ENCODE measurements at regions of chr10 and their contacts with region 1.

Region 1: DNA sequence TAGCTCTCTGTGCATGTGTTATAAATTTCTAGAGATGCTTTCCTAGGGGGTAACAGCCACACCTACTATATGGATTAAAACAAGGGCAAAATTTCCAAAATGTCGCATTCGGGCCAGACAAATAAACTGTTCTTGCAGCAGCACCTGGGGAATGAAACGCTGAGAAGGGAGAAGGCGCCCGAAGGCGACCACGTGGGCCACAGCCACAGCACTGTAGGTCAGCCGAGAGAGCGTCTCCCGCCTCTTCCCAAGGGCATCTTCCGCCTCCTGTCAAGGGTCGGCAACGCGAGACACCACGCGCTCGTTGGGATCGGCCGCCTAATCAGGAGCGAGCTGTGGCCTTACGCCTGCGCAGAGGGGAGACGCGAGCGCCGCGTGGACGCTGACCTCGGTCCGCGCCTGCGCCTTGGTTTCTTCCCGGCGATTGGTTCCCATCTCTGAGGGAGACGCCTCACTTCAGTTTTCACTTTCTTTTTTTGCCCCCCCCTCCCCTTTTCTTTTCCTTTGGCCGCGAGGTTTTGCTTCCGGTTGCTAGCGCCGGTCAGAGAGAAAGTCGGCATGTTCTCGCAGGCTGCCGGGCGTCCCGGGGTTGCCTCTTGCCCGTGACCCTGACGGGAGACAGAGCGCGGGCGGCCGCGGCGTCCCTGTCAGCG is at the start of gene TASOR2:
- DNase-seq: peak; percentile 96
- ATAC-seq: peak; percentile 88
- H3K4me3 ChIP-seq: peak within 1 kb of the TSS; percentile 95
- H3K27ac ChIP-seq: peak within 1 kb of the TSS; percentile 90
- H3K4me1 ChIP-seq: peaks cover 6% of the 10 kb centered on the region; the same call in 1 of the 2 replicates
- H3K27me3 ChIP-seq: no peaks in the 10 kb centered on the region
- CTCF ChIP-seq: no peak
- EP300 ChIP-seq: no peak
- POLR2A ChIP-seq: peak; percentile 76
- RAD21 ChIP-seq: no peak
- polyA plus RNA-seq, gene TASOR2: 8.2 to 10.6 TPM

Region 2: GRCh38 chr10:5184987-5185775 is 499.3 kb before region 1 on chr10 and contains the start of gene AKR1C8:
- CTCF ChIA-PET with region 1: no interaction called
- POLR2A ChIA-PET with region 1: no interaction called
- RAD21 ChIA-PET with region 1: no interaction called
- SMC1A ChIA-PET with region 1: no interaction called
- in situ Hi-C with region 1: no loop called
- intact Hi-C with region 1: no loop called
- DNase-seq: no peak
- ATAC-seq: no peak
- H3K4me3 ChIP-seq: no peak within 1 kb of the TSS
- H3K27ac ChIP-seq: no peak within 1 kb of the TSS
- H3K4me1 ChIP-seq: no peaks in the 10 kb centered on the region
- H3K27me3 ChIP-seq: no peaks in the 10 kb centered on the region
- CTCF ChIP-seq: no peak
- EP300 ChIP-seq: no peak
- POLR2A ChIP-seq: no peak
- RAD21 ChIP-seq: no peak
- polyA plus RNA-seq, gene AKR1C8: not detected

Region 3: DNA sequence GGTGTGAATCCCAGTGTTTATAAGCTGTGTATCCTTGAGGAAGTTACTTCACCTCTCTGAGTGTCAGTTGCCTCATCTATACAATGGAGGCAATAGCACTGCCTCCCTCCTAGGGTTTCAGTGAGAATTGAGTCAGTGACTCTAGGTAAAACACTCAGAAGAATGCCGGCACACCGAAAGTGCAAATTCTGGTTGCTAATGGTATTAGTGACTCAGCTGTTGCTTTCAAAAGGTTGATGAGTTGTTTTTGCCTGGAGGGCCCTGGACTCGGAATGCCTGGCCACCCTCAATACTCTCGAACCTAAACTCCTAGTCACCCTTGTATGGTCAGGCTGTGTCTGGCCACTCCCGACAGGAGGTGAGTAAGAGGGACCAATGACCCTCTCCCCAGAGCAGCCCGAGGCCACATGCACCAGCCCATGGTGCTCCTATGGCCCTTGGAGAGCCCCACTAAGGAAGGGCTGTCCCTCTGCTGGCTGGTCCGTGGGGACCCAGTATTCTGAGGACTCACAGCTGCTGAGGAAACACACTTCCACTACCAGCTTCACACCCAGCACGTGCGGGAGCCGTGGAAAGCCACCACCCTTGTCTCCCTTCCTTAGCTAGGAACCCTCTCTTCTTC is 99.4 kb before region 1 on chr10:
- CTCF ChIA-PET with region 1: no interaction called
- POLR2A ChIA-PET with region 1: no interaction called
- RAD21 ChIA-PET with region 1: no interaction called
- SMC1A ChIA-PET with region 1: no interaction called
- in situ Hi-C with region 1: no loop called
- intact Hi-C with region 1: no loop called
- DNase-seq: peak; percentile 41
- ATAC-seq: peak; percentile 6; the same call in 1 of the 3 replicates
- H3K4me3 ChIP-seq: no peak overlapping the region
- H3K27ac ChIP-seq: no peak overlapping the region
- H3K4me1 ChIP-seq: peaks cover 47% of the 10 kb centered on the region
- H3K27me3 ChIP-seq: peaks cover 1 to 3% of the 10 kb centered on the region in 2 experiments; a peak in 2 of 4 replicates
- CTCF ChIP-seq: no peak
- EP300 ChIP-seq: no peak
- POLR2A ChIP-seq: no peak
- RAD21 ChIP-seq: no peak

Region 4: DNA sequence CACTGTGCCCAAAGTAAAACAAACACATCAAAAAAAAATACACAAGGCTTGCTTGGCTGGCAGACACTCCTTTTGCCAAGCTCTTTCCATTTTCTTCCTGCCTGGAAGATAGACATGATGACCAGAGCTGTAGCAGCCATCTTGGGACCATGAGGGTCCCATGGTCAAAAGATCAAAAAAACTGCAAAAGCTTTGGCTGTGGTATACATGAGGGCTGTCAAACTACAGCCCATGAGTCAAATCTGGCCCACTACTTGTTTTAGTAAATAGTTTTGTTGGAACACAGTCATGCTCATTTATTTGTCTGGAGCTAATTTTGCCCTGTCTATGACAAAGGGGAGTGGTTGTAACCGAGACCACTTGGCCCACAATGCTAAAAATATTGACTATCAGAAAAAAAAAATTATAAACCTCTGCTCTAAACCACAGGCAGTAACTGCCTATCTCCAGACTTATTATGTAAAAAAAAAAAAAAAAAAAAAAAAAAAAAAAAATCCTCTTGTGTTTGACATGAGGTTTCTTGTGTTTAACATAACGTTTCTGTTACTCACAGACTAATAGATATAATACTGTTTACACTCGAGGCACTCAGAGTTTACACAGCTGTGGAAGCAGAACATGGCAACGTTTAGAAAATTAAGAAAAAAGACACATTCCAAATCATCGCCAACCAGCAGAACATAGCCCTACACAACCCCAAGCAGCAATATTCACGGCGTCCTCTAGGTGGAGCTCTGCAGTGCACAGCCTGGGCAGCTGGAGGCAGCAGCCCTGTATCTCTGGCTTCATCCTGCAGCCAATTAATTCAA is 54.9 kb before region 1 on chr10:
- CTCF ChIA-PET with region 1: interaction called, 13 read pairs
- POLR2A ChIA-PET with region 1: no interaction called
- RAD21 ChIA-PET with region 1: no interaction called
- SMC1A ChIA-PET with region 1: interaction called, 3 read pairs
- in situ Hi-C with region 1: no loop called
- intact Hi-C with region 1: no loop called
- DNase-seq: peak; percentile 25
- ATAC-seq: peak; percentile 98
- H3K4me3 ChIP-seq: no peak overlapping the region
- H3K27ac ChIP-seq: no peak overlapping the region
- H3K4me1 ChIP-seq: peaks cover 8% of the 10 kb centered on the region
- H3K27me3 ChIP-seq: peaks cover 3 to 5% of the 10 kb centered on the region in 2 experiments; a peak in 3 of 4 replicates
- CTCF ChIP-seq: peak; percentile 82 to 99 (median 97)
- EP300 ChIP-seq: no peak
- POLR2A ChIP-seq: no peak
- RAD21 ChIP-seq: peak; percentile 88

Region 5: GRCh38 chr10:5710859-5711258 is 26.4 kb after region 1 on chr10:
- CTCF ChIA-PET with region 1: interaction called, 5 read pairs
- POLR2A ChIA-PET with region 1: interaction called, 3 read pairs
- RAD21 ChIA-PET with region 1: interaction called, 6 read pairs
- SMC1A ChIA-PET with region 1: interaction called, 191 read pairs
- in situ Hi-C with region 1: no loop called
- intact Hi-C with region 1: loop called (anchors 2 kb)
- DNase-seq: no peak
- ATAC-seq: peak; percentile 63
- H3K4me3 ChIP-seq: peak overlapping the region; percentile 31; the same call in 1 of the 2 replicates
- H3K27ac ChIP-seq: peak overlapping the region; percentile 51; the same call in 1 of the 2 replicates
- H3K4me1 ChIP-seq: peaks cover 4% of the 10 kb centered on the region; the same call in 1 of the 2 replicates
- H3K27me3 ChIP-seq: no peaks in the 10 kb centered on the region
- CTCF ChIP-seq: no peak
- EP300 ChIP-seq: no peak
- POLR2A ChIP-seq: no peak
- RAD21 ChIP-seq: no peak

Region 6: DNA sequence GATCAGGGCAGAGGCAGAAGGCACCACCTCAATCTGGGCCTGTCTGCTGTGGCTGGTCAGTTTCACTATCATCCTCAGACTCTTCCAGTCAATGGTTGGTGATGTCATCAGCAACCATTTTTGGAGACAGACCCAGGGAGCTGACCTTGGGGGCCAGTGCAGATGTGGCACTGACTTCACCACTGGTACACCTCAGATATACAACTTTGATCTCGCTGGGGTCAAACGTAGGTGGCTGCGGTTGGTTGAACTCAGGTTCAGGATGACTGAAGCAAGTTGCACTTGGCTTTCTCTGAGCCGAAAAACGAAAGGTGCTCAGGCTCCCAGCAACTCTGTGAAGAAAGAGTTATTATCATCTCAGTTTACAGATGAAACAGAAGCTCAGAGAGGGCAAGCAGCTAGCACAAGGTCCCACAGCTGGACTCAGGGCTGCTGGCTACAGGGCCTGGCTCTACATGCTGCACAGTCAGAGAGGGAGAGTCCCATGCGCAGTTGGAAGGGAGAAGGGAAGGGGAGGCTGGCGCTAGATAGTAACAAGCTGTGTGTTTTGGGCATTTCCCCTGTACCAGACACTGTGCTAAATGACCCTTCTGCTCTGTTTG is 178.0 kb after region 1 on chr10:
- CTCF ChIA-PET with region 1: interaction called, 3 read pairs
- POLR2A ChIA-PET with region 1: no interaction called
- RAD21 ChIA-PET with region 1: no interaction called
- SMC1A ChIA-PET with region 1: no interaction called
- in situ Hi-C with region 1: loop called (anchors 5 kb)
- intact Hi-C with region 1: no loop called
- DNase-seq: peak; percentile 94
- ATAC-seq: peak; percentile 96
- H3K4me3 ChIP-seq: peak overlapping the region; percentile 34
- H3K27ac ChIP-seq: peak overlapping the region; percentile 73
- H3K4me1 ChIP-seq: peaks cover 20% of the 10 kb centered on the region
- H3K27me3 ChIP-seq: no peaks in the 10 kb centered on the region
- CTCF ChIP-seq: no peak
- EP300 ChIP-seq: peak; percentile 74 to 88; a peak in 2 of 4 replicates
- POLR2A ChIP-seq: peak; percentile 46; the same call in 1 of the 2 replicates
- RAD21 ChIP-seq: no peak

Region 7: DNA sequence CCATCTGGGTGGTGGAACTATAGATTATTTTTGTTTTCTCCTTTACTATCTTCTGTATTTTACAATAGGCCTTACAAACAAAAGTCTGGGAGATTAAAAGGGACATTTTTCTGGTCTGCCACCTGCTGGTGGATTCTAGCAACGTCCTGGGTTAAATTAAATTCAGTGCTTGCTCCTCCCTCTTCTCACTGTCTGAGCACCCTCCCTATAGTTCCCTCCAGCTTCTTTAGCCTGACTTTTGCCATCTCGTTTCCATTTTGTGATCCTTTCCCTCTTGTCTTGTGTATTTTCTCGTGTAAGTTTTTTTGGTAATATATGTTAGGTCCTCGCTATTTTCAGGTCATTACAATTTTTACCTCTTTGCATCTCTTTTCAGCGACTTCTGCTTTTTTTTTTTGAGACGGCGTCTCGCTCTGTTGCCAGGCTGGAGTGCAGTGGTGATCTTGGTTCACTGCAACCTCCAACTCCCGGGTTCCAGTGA is 189.1 kb after region 1 on chr10:
- CTCF ChIA-PET with region 1: interaction called, 8 read pairs
- POLR2A ChIA-PET with region 1: interaction called, 8 read pairs
- RAD21 ChIA-PET with region 1: interaction called, 4 read pairs
- SMC1A ChIA-PET with region 1: interaction called, 3 read pairs
- in situ Hi-C with region 1: no loop called
- intact Hi-C with region 1: loop called (anchors 5 kb)
- DNase-seq: peak; percentile 59
- ATAC-seq: peak; percentile 98
- H3K4me3 ChIP-seq: peak overlapping the region; percentile 26; the same call in 1 of the 2 replicates
- H3K27ac ChIP-seq: 0 out of 2 replicates have a peak overlapping the region, but pooled peaks have one; percentile 18
- H3K4me1 ChIP-seq: peaks cover 3% of the 10 kb centered on the region
- H3K27me3 ChIP-seq: no peaks in the 10 kb centered on the region
- CTCF ChIP-seq: peak; percentile 64 to 73 (median 66)
- EP300 ChIP-seq: no peak
- POLR2A ChIP-seq: no peak
- RAD21 ChIP-seq: peak; percentile 71

Region 8: GRCh38 chr10:5977471-5978229 is 293.2 kb after region 1 on chr10 and contains the start of gene IL15RA:
- CTCF ChIA-PET with region 1: interaction called, 3 read pairs
- POLR2A ChIA-PET with region 1: interaction called, 3 read pairs
- RAD21 ChIA-PET with region 1: interaction called, 3 read pairs
- SMC1A ChIA-PET with region 1: interaction called, 3 read pairs
- in situ Hi-C with region 1: no loop called
- intact Hi-C with region 1: loop called (anchors 5 kb)
- DNase-seq: no peak
- ATAC-seq: peak; percentile 78
- H3K4me3 ChIP-seq: peak within 1 kb of the TSS; percentile 95
- H3K27ac ChIP-seq: peak within 1 kb of the TSS; percentile 88
- H3K4me1 ChIP-seq: peaks cover 12% of the 10 kb centered on the region
- H3K27me3 ChIP-seq: no peaks in the 10 kb centered on the region; a peak in 1 of 4 replicates
- CTCF ChIP-seq: peak; percentile 22 to 54 (median 30); a peak in 5 of 6 replicates
- EP300 ChIP-seq: no peak
- POLR2A ChIP-seq: peak; percentile 65
- RAD21 ChIP-seq: peak; percentile 21; the same call in 1 of the 2 replicates
- polyA plus RNA-seq, gene IL15RA: 2.0 to 4.2 TPM